Panc1 (cell line): ENCODE measurements at regions of chr3 and their contacts with region 1.

Region 1: GRCh38 chr3:15714448-15714847 is 83.3 kb downstream of the ANKRD28 start:
- DNase-seq: no peak
- ATAC-seq: no peak
- H3K4me3 ChIP-seq: no peak overlapping the region
- H3K27ac ChIP-seq: no peak overlapping the region; the same call in 1 of the 2 replicates
- H3K4me1 ChIP-seq: no peaks in the 10 kb centered on the region; the same call in 1 of the 2 replicates
- H3K27me3 ChIP-seq: no peaks in the 10 kb centered on the region
- CTCF ChIP-seq: no peak

Region 2: DNA sequence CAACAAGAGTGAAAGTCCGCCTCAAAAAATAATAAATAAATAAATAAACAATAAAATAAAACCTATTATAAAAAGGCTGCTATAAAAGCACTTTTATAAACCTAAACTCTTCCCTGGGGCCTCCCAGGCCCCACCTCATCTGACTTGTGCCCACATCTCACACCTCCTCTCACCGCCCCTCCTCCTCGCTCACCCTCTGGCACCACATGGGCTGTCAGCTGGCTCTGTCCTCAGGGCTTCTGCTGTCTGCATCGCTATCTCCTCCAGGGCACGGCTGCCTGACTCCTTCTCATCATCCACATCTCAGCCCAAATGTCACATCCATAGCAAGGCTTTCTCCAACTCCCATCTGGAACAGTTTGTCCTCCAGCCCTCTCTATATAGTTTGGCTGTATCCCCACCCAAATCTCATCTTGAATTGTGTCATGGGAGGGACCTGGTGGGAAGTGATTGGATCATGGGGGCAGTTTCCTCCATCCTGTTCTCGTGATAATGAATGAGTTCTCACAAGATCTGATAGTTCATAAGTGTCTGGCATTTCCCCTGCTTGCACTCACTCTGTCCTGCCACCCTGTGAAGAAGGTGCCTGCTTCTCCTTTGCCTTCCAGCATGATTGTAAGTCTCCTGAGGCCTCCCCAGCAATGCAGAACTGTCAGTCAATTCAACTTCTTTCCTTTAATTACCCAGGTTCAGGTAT is 373.3 kb before region 1 on chr3:
- CTCF ChIA-PET with region 1: no interaction called
- POLR2A ChIA-PET with region 1: interaction called, 13 read pairs
- in situ Hi-C with region 1: no loop called
- intact Hi-C with region 1: no loop called
- DNase-seq: no peak
- ATAC-seq: no peak
- H3K4me3 ChIP-seq: no peak overlapping the region
- H3K27ac ChIP-seq: no peak overlapping the region
- H3K4me1 ChIP-seq: no peaks in the 10 kb centered on the region
- H3K27me3 ChIP-seq: no peaks in the 10 kb centered on the region
- CTCF ChIP-seq: no peak